ENCODE measurements at regions of chr18 and their contacts with region 1.

Region 1: DNA sequence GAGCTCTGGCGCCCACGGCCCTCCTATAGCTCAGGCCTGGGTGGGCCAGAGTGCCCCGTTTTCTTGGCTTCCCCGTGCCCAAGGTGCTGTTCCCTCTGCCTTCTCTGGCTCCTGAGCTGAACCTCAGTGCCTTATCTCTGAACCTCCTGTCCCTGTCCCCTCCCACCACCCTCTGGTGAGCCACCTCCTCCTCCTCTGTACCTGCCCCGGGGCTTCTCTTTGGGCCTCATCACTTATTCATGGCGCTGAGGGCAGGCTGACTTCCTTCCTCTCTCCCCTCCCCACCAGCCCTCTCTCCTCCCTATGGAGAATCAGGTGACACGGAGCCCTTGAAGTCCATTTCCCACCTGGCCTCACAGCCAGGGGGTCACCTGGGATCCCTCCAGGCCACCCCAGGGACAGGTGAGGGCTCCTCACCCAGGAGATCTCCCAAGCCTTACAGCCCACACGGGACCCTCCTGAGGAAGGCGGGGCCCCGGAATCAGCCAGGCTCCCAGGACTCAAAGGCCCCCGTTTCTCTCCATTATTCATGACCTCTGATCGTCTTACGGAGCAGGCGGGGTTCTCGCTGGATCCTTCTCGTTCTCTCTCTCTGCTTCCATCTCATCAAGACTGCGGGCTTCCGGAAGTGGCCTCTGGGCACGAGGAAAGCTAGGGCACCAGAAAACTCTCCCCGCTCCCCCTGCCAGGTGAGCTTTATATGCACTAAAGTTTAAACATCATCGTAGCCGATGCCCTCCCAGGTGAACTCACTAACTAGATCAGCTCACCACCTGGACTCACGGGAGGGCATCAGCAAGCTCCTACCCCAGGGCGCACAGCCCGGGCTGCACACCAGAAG is at the start of gene LOXHD1:
- DNase-seq: no peak
- ATAC-seq: no peak
- H3K4me3 ChIP-seq: no peak within 1 kb of the TSS
- H3K4me3 Mint-ChIP-seq: no peak within 1 kb of the TSS
- H3K27ac ChIP-seq: no peak within 1 kb of the TSS
- H3K27ac Mint-ChIP-seq: no peak within 1 kb of the TSS
- H3K4me1 ChIP-seq: peaks cover 0 to 3% of the 10 kb centered on the region in 2 experiments
- H3K4me1 Mint-ChIP-seq: peaks cover 0 to 2% (median 0%) of the 10 kb centered on the region in 3 donors
- H3K27me3 ChIP-seq: peaks cover 0 to 11% of the 10 kb centered on the region in 2 experiments
- H3K27me3 Mint-ChIP-seq: no peaks in the 10 kb centered on the region
- total RNA-seq, gene LOXHD1: 0.07 to 0.21 (median 0.15) TPM in 4 of 5 donors, not detected in the other

Region 2: DNA sequence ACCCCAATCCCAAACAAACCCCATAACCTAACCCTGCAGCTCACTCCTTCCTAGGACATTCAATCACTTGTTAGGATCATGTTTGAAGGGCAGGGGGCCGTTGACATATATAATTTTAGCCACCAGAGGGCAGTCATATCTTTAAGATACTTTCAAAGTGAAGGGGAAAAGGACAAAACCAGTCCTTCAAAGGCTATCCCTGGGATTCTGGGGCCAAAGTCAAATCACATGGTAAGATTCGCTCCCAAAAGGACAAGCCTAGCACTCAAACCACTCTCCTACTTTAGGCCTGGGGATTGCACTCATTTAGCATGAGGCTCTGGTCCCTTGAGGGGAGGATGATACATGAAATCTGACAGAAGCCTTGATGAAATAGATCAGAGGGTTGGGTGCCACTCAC is 508.5 kb before region 1 on chr18:
- CTCF ChIA-PET with region 1: interaction called, 38 to 55 read pairs
- POLR2A ChIA-PET with region 1: no interaction called
- DNase-seq: peak in 24 of 35 experiments; percentile 15 to 73 (median 34)
- ATAC-seq: peak; percentile 60 to 69 (median 66)
- H3K4me3 ChIP-seq: no peak overlapping the region
- H3K4me3 Mint-ChIP-seq: peak overlapping the region in 1 of 3 donors; percentile 9
- H3K27ac ChIP-seq: no peak overlapping the region
- H3K27ac Mint-ChIP-seq: peak overlapping the region; percentile 61 to 69
- H3K4me1 ChIP-seq: peaks cover 0 to 37% of the 10 kb centered on the region in 2 experiments
- H3K4me1 Mint-ChIP-seq: peaks cover 37 to 49% (median 46%) of the 10 kb centered on the region in 3 donors
- H3K27me3 ChIP-seq: no peaks in the 10 kb centered on the region
- H3K27me3 Mint-ChIP-seq: no peaks in the 10 kb centered on the region

Region 3: GRCh38 chr18:46281185-46282176 is 375.9 kb before region 1 on chr18:
- CTCF ChIA-PET with region 1: interaction called, 22 to 37 read pairs
- POLR2A ChIA-PET with region 1: no interaction called
- DNase-seq: peak in 34 of 35 experiments; percentile 8 to 65 (median 40)
- ATAC-seq: peak; percentile 66 to 80 (median 75)
- H3K4me3 ChIP-seq: no peak overlapping the region
- H3K4me3 Mint-ChIP-seq: no peak overlapping the region
- H3K27ac ChIP-seq: no peak overlapping the region
- H3K27ac Mint-ChIP-seq: no peak overlapping the region
- H3K4me1 ChIP-seq: no peaks in the 10 kb centered on the region
- H3K4me1 Mint-ChIP-seq: peaks cover 15 to 25% (median 18%) of the 10 kb centered on the region in 3 donors
- H3K27me3 ChIP-seq: no peaks in the 10 kb centered on the region
- H3K27me3 Mint-ChIP-seq: no peaks in the 10 kb centered on the region

Region 4: DNA sequence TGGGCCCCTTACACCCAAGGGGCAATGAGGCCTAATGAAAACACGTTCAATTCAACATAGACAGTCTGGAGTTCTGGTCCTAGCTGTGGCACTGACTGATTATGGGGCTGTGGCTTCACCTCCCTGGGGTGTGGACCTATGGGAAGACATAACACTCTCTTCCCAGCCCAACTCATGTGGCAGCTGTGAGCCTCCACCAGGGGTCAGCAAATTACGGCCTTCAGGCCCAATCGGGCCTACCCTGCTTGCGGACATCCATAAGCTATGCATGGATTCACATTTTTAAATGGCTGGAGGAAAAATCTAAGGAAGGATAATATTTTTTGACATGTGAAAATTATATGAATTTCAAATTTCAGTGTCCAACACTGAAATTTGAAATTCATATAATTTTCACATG is 101.6 kb before region 1 on chr18:
- CTCF ChIA-PET with region 1: interaction called in 1 of 2 experiments, 11 read pairs
- POLR2A ChIA-PET with region 1: no interaction called
- DNase-seq: peak in 5 of 35 experiments; percentile 1 to 22 (median 13)
- ATAC-seq: no peak
- H3K4me3 ChIP-seq: no peak overlapping the region
- H3K4me3 Mint-ChIP-seq: no peak overlapping the region
- H3K27ac ChIP-seq: no peak overlapping the region
- H3K27ac Mint-ChIP-seq: no peak overlapping the region
- H3K4me1 ChIP-seq: no peaks in the 10 kb centered on the region
- H3K4me1 Mint-ChIP-seq: no peaks in the 10 kb centered on the region
- H3K27me3 ChIP-seq: peaks cover 0 to 6% of the 10 kb centered on the region in 2 experiments
- H3K27me3 Mint-ChIP-seq: peaks cover 0 to 2% of the 10 kb centered on the region in 2 donors